ENCODE measurements at regions of chr4 and their contacts with region 1.

Region 1: GRCh38 chr4:39977489-39978377 is at the start of gene PDS5A:
- DNase-seq: peak; percentile 76 to 96 (median 86)
- ATAC-seq: peak; percentile 85
- H3K4me3 ChIP-seq: peak within 1 kb of the TSS; percentile 90
- H3K4me3 Mint-ChIP-seq: peak within 1 kb of the TSS; percentile 86
- H3K27ac ChIP-seq: peak within 1 kb of the TSS; percentile 78 to 92
- H3K27ac Mint-ChIP-seq: peak within 1 kb of the TSS; percentile 93
- H3K4me1 ChIP-seq: peaks cover 36% of the 10 kb centered on the region
- H3K4me1 Mint-ChIP-seq: peaks cover 34% of the 10 kb centered on the region
- H3K27me3 ChIP-seq: no peaks in the 10 kb centered on the region
- H3K27me3 Mint-ChIP-seq: no peaks in the 10 kb centered on the region
- CTCF ChIP-seq: peak; percentile 73
- total RNA-seq, gene PDS5A: 80.0 to 80.6 TPM

Region 2: GRCh38 chr4:38723726-38724474 is 1253.8 kb before region 1 on chr4:
- CTCF ChIA-PET with region 1: no interaction called
- POLR2A ChIA-PET with region 1: no interaction called
- intact Hi-C with region 1: no loop called
- DNase-seq: no peak
- ATAC-seq: no peak
- H3K4me3 ChIP-seq: no peak overlapping the region
- H3K4me3 Mint-ChIP-seq: no peak overlapping the region
- H3K27ac ChIP-seq: no peak overlapping the region
- H3K27ac Mint-ChIP-seq: no peak overlapping the region
- H3K4me1 ChIP-seq: peaks cover 14% of the 10 kb centered on the region
- H3K4me1 Mint-ChIP-seq: peaks cover 8% of the 10 kb centered on the region
- H3K27me3 ChIP-seq: no peaks in the 10 kb centered on the region
- H3K27me3 Mint-ChIP-seq: no peaks in the 10 kb centered on the region
- CTCF ChIP-seq: no peak

Region 3: GRCh38 chr4:39353478-39354253 is 624.1 kb before region 1 on chr4:
- CTCF ChIA-PET with region 1: no interaction called
- POLR2A ChIA-PET with region 1: no interaction called
- intact Hi-C with region 1: loop called in 1 of 2 experiments (anchors 5 kb)
- DNase-seq: peak in 3 of 14 experiments; percentile 71 to 81 (median 72)
- ATAC-seq: peak; percentile 77
- H3K4me3 ChIP-seq: peak overlapping the region; percentile 53
- H3K4me3 Mint-ChIP-seq: peak overlapping the region; percentile 88
- H3K27ac ChIP-seq: peak overlapping the region; percentile 75 to 88
- H3K27ac Mint-ChIP-seq: peak overlapping the region; percentile 97
- H3K4me1 ChIP-seq: peaks cover 20% of the 10 kb centered on the region
- H3K4me1 Mint-ChIP-seq: peaks cover 67% of the 10 kb centered on the region
- H3K27me3 ChIP-seq: no peaks in the 10 kb centered on the region
- H3K27me3 Mint-ChIP-seq: no peaks in the 10 kb centered on the region
- CTCF ChIP-seq: no peak

Region 4: DNA sequence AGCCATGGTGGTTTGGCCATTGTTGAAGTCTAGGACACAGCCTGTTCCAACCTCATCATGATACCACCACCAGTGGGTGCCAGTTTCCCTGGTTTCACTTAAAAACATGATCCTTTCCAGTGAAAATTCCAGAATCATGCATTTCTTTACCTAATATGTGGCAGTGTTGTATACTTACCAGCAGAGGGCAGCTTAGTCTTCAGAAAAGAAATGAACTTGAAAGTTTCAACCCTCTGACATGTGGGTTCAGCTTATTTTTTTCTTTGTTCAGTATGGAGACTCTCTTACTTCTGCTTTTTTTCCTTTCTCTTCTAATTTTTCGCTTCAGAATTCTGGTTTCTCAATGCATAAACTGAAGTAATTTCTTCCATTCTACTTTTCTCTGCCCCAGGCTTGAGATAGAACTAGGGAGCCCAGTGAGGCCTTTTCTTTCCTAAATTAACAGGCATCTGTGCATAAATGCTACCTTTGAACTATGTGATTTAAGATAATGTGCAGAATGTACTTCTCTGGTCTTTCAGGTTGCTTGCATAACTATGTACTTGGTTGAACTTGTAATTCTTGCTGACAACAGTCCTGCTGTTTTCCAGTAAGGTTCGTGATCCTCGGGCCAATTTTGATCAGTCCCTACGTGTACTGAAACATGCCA is 508.2 kb before region 1 on chr4:
- CTCF ChIA-PET with region 1: interaction called, 6 read pairs
- POLR2A ChIA-PET with region 1: no interaction called
- intact Hi-C with region 1: loop called in 1 of 2 experiments (anchors 1 kb)
- DNase-seq: peak in 4 of 14 experiments; percentile 11 to 72 (median 65)
- ATAC-seq: peak; percentile 94
- H3K4me3 ChIP-seq: no peak overlapping the region
- H3K4me3 Mint-ChIP-seq: no peak overlapping the region
- H3K27ac ChIP-seq: no peak overlapping the region
- H3K27ac Mint-ChIP-seq: no peak overlapping the region
- H3K4me1 ChIP-seq: no peaks in the 10 kb centered on the region
- H3K4me1 Mint-ChIP-seq: peaks cover 7% of the 10 kb centered on the region
- H3K27me3 ChIP-seq: no peaks in the 10 kb centered on the region
- H3K27me3 Mint-ChIP-seq: no peaks in the 10 kb centered on the region
- CTCF ChIP-seq: peak; percentile 92

Region 5: DNA sequence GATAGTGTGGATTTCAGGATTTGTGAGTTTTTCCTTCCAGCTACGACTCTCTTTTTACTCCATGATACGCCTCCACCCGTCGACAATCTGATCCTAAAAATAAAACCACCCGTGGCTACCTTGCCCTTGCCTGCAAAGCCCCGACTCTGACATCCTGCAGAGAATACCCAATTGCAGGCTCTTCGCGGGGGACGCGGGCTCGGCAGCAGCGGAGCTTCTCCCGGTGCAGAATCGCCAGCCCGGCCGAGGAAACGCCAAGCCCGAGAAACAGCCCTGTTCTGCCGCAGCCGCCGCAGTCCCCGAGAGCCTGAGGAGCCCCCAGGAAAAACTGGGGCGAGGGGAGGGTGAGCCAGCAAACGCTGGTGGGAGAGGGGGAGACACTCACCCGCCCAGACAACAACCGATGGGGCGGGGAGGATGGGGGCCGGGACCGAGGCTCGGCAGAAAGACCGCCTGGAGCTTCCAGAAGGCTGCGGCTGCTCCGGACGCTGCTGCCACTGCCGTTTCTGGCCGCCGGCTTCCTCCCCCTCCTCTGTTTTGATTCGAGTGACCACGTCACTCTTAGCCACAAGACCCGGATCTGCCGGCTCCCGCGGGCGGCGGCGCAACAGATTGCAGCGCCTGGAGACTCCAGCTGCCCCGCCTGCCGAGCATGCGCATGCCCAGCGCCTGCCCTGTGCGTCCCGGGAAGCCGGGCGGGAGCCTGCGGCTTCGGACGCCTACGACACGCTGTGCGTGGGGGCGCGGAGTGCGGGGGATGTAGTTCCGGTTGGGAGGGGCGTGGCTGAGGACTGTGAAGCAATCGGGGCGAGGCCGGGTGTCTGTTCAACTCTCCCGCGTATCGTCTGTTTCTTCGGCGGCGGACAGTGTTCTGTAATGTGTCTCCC is 339.1 kb before region 1 on chr4 and contains the start of gene SMIM14:
- CTCF ChIA-PET with region 1: interaction called, 5 read pairs
- POLR2A ChIA-PET with region 1: no interaction called
- intact Hi-C with region 1: loop called in 1 of 2 experiments (anchors 2 kb)
- DNase-seq: peak; percentile 65 to 95 (median 84)
- ATAC-seq: peak; percentile 79
- H3K4me3 ChIP-seq: peak within 1 kb of the TSS; percentile 96
- H3K4me3 Mint-ChIP-seq: peak within 1 kb of the TSS; percentile 88
- H3K27ac ChIP-seq: peak within 1 kb of the TSS; percentile 78 to 90
- H3K27ac Mint-ChIP-seq: peak within 1 kb of the TSS; percentile 85
- H3K4me1 ChIP-seq: peaks cover 25% of the 10 kb centered on the region
- H3K4me1 Mint-ChIP-seq: peaks cover 50% of the 10 kb centered on the region
- H3K27me3 ChIP-seq: no peaks in the 10 kb centered on the region
- H3K27me3 Mint-ChIP-seq: no peaks in the 10 kb centered on the region
- CTCF ChIP-seq: no peak
- total RNA-seq, gene SMIM14: 2.0 to 3.1 TPM

Region 6: DNA sequence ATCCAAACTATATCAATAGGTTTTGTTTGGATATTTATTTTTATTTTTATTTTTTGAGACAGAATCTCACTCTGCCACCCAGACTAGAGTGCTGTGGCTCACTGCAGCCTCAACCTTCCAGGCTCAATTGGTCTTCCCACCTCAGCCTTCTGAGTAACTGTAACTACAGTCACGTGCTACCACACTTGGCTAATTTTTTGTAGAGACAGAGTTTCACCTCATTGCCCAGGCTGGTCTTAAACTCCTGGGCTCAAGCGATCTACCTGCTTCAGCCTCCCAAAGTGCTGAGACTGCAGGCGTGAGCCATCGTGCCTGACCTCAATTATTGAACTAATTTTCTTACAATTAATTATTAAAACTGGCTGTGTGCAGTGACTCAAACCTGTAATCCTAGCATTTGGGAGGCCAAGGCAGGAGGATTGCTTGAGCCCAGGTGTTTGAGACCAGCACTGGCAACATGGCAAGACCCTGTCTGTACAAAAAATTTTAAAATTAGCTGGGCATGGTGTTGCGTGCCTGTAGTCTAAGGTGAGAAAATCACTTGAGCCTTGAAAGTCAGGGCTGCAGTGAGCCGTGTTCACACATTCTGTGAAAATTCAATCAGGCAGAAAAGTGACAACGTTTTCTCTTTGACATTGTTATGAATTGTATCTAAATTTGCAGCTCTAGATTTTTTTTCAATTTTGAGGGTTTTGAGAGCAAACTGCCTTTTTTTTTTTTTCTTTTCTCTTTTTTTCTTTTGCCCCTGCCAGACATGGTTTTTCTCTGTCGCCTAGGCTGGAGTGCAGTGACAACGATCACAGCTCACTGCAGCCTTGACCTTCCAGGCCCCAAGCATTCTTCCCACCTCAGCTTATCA is 213.8 kb before region 1 on chr4:
- CTCF ChIA-PET with region 1: no interaction called
- POLR2A ChIA-PET with region 1: no interaction called
- intact Hi-C with region 1: no loop called
- DNase-seq: no peak
- ATAC-seq: no peak
- H3K4me3 ChIP-seq: no peak overlapping the region
- H3K4me3 Mint-ChIP-seq: no peak overlapping the region
- H3K27ac ChIP-seq: no peak overlapping the region
- H3K27ac Mint-ChIP-seq: no peak overlapping the region
- H3K4me1 ChIP-seq: no peaks in the 10 kb centered on the region
- H3K4me1 Mint-ChIP-seq: no peaks in the 10 kb centered on the region
- H3K27me3 ChIP-seq: no peaks in the 10 kb centered on the region
- H3K27me3 Mint-ChIP-seq: no peaks in the 10 kb centered on the region
- CTCF ChIP-seq: no peak

Region 7: DNA sequence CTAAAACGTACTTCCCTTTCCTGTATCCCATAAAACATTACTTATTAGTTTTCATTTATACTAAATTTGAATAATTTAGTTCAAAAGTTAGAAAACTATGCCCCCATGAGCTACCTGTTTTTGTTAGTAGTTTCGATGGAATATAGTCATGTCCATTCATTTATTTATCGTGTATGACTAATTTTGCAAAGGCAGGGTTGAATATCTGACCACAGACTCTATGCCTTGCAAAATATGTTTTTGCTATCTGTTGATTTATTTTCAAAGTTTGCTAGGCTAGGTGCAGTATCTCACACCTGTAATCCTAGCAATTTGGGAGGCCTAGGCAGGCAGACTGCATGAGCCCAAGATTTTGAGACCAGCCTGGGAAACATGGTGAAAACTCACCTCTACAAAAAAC is 78.4 kb before region 1 on chr4:
- CTCF ChIA-PET with region 1: no interaction called
- POLR2A ChIA-PET with region 1: no interaction called
- intact Hi-C with region 1: loop called in 1 of 2 experiments (anchors 5 kb)
- DNase-seq: no peak
- ATAC-seq: no peak
- H3K4me3 ChIP-seq: no peak overlapping the region
- H3K4me3 Mint-ChIP-seq: no peak overlapping the region
- H3K27ac ChIP-seq: no peak overlapping the region
- H3K27ac Mint-ChIP-seq: no peak overlapping the region
- H3K4me1 ChIP-seq: no peaks in the 10 kb centered on the region
- H3K4me1 Mint-ChIP-seq: no peaks in the 10 kb centered on the region
- H3K27me3 ChIP-seq: no peaks in the 10 kb centered on the region
- H3K27me3 Mint-ChIP-seq: no peaks in the 10 kb centered on the region
- CTCF ChIP-seq: no peak

Measured in CD4-positive, alpha-beta T cell (primary cell).